HEK293 (cell line): ENCODE measurements at regions of chr1 and their contacts with region 1.

Region 1: GRCh38 chr1:161177112-161177935 is at the start of gene B4GALT3:
- H3K4me3 ChIP-seq: peak within 1 kb of the TSS; percentile 88
- H3K27ac ChIP-seq: no peak within 1 kb of the TSS; the same call in 1 of the 2 replicates
- H3K4me1 ChIP-seq: no peaks in the 10 kb centered on the region
- CTCF ChIP-seq: peak; percentile 55; the same call in 1 of the 2 replicates

Region 2: GRCh38 chr1:161192476-161193465 is 15.4 kb after region 1 on chr1:
- CTCF ChIA-PET with region 1: interaction called, 39 read pairs
- POLR2A ChIA-PET with region 1: interaction called, 4 read pairs
- H3K4me3 ChIP-seq: no peak overlapping the region
- H3K27ac ChIP-seq: no peak overlapping the region
- H3K4me1 ChIP-seq: no peaks in the 10 kb centered on the region
- CTCF ChIP-seq: peak; percentile 71

Region 3: DNA sequence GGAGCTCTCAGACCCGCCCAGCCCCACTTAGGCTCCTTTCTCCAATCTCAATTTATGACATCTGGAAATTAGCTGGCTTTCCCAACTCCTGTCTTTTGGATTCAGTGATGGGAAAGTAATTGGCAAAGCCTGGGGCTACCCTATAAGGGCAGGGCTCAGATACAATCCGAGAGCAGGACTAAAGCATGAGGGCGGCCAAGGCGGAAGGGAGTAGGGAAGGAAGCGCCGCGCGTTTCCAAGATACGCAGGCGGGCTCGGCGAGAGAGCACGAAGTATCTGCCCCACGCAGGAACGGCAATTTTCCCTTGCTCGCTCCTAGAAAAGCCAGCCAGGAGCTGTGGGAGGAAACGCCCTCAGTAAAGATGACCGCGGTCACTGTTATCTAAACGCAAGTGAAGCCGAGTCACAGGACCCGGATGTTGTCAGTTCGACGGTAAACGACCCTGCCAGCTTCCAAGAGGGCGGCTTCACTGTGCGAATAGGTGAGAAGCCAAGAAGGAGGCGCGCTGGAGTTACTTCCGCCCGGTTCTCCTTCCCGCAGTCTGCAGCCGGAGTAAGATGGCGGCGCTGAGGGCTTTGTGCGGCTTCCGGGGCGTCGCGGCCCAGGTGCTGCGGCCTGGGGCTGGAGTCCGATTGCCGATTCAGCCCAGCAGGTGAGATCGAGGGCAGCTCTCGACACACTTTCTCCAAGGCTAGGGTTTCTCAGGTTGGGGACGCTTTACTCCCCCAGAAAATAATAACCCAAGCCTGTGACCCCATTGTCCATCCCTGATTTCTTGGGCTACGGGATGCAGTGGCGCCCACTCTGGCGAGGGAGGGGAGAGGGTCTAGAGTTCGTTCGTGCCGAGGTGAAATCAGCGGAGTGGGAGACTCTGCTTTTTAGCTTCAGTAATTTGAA is 24.8 kb after region 1 on chr1 and contains the start of gene NDUFS2:
- CTCF ChIA-PET with region 1: interaction called, 5 read pairs
- POLR2A ChIA-PET with region 1: interaction called, 10 read pairs
- H3K4me3 ChIP-seq: peak within 1 kb of the TSS; percentile 56
- H3K27ac ChIP-seq: peak within 1 kb of the TSS; percentile 72
- H3K4me1 ChIP-seq: peaks cover 9% of the 10 kb centered on the region; the same call in 1 of the 2 replicates
- CTCF ChIP-seq: peak; percentile 79